MCF 10A (cell line): ENCODE measurements at regions of chr17 and their contacts with region 1.

Region 1: DNA sequence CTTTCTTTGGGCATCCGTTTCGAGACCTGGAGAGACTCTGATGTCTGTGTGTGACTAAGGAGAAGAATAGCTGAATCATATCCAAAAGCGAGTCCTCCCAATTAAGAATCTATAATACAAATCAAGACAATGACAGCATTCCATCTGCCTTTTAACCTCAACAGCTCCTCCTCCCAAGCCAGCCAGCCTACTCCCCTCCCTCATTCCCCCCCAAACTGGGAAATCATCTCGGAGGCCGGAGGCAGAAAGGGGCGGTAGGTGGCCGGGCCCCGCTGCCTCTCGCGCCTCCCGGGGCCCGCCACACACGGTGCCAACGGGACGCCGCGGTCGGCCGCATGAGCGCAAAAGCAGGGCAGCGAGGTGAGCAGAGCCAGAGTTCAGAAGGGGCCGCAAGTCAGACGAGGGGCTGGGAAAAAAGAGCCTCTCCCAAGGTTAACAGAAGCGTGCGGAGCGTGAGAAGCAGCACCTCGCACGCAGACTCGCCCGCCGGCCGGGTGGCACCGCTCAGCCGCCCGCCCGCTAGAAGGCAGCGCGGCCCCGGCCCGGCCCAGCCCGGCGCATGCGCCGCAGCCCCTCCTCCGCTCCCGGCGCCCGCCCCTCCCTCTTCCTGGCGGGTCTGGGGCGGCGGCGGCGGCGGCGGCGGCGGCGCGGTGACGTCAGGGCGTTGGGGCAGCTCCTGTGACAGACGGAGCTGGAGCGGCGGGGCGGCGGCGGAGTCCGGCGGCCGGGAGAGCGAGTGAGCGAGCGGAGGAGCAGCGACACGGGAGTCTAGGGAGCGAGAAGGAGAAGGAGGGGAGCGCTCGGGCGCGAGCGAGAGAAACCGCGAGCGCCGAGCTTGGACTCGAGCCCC is at the start of gene PAFAH1B1:
- DNase-seq: peak; percentile 93
- H3K4me3 Mint-ChIP-seq: peak within 1 kb of the TSS; percentile 98
- H3K27ac Mint-ChIP-seq: peak within 1 kb of the TSS; percentile 96
- H3K4me1 Mint-ChIP-seq: peaks cover 14% of the 10 kb centered on the region
- H3K27me3 Mint-ChIP-seq: no peaks in the 10 kb centered on the region
- CTCF ChIP-seq: peak; percentile 7
- total RNA-seq, gene PAFAH1B1: 170 and 192 TPM in 2 replicates

Region 2: DNA sequence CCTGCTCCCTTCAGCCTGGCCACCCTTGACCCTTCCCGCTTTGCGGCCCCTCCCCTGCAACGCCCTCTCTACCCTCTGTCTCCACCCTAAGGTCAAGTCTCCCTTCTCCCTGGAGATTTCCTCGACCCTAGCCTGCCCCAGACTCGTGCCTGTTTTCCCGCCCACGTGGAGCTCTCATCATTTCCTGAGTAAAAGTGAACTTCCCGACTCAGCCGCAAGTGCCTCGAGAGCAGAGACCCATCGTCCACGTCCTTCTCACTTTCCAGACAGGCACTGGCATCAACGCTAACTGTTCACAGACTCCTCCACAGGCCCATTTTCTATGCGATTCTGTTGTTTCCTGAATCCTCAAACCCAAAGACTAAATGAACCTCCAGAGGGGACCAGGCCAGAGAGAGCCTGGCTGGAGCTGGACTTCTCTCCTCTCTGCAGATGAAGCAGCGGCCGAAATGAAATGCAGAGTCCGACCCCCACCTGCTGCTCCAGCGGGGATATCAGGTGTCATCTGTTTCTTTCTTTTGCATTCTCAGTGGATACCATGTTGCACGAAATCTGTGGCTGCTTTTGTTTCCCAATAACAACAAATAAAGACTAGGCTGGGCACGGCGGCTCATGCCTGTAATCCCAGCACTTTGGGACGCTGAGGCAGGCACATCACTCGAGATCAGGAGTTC is 620.6 kb before region 1 on chr17:
- CTCF ChIA-PET with region 1: no interaction called
- POLR2A ChIA-PET with region 1: no interaction called
- intact Hi-C with region 1: no loop called
- DNase-seq: no peak
- H3K4me3 Mint-ChIP-seq: no peak overlapping the region
- H3K27ac Mint-ChIP-seq: no peak overlapping the region
- H3K4me1 Mint-ChIP-seq: peaks cover 8% of the 10 kb centered on the region
- H3K27me3 Mint-ChIP-seq: no peaks in the 10 kb centered on the region
- CTCF ChIP-seq: no peak

Region 3: DNA sequence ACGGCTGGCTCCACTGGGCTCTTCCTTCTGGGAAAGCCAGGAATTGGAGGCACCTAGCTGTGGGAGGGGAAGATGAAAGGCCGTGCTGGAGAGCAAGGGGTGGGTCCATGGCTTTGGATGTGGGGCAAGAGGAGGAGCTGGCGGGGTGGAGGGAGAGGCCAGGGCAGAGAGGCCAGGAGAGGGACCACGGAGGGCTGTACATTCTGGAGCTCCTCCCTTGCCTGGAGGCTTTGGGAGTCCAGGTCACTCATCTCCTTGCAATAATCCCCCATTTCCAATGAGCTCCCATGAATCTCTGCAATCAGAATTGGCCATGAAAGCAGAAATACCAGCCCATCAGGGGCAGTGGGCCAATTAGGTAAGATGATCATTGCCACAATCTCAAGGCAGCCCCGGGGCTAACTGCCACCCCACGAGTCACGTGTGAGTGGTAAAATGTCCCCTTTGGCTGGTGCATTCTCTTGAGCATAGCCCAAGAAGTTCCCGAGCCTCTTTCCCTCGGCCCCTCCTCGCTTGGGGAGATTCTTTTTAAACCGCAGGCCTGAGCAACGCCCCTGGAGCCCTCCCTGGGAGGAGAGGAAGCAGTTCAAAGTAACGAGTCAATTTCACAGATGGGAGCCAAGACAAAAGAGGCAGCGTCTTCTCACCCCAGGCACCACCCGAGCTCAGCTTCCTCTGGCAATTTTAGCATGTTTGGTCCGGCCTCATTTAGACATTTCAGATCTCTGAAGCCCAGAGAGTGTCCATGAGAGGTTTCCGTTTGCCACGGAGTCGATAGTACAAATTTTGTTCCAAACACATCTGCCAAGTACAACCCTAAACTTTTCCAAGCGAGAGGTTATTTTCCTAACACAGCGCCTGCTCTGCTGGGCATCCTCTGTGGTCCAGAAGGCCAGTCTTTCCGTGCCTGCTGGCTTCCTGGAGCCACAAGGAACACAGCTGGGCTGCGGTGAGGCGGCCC is 581.5 kb before region 1 on chr17:
- CTCF ChIA-PET with region 1: no interaction called
- POLR2A ChIA-PET with region 1: no interaction called
- intact Hi-C with region 1: no loop called
- DNase-seq: peak; percentile 74
- H3K4me3 Mint-ChIP-seq: peak overlapping the region; percentile 53
- H3K27ac Mint-ChIP-seq: peak overlapping the region; percentile 85
- H3K4me1 Mint-ChIP-seq: peaks cover 39% of the 10 kb centered on the region
- H3K27me3 Mint-ChIP-seq: no peaks in the 10 kb centered on the region
- CTCF ChIP-seq: no peak

Region 4: DNA sequence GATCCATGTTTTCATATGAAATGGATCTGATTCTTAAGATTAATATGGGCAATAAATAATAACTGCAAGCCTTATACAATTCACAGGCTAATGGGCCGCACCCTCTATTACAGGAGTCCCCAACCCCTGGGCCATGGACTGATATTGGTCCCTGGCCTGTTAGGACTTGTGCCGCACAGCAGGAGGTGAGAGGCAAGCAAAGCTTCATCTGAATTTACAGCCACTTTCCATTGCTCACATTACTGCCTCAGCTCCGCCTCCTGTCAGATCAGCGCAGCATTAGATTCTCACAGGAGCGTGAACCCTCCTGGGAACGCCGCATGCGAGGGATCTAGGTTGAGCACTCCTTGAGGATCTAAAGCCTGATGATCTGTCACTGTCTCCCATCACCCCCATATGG is 108.3 kb before region 1 on chr17:
- CTCF ChIA-PET with region 1: interaction called, 5 read pairs
- POLR2A ChIA-PET with region 1: interaction called, 11 read pairs
- intact Hi-C with region 1: no loop called
- DNase-seq: peak; percentile 81
- H3K4me3 Mint-ChIP-seq: peak overlapping the region; percentile 65
- H3K27ac Mint-ChIP-seq: no peak overlapping the region
- H3K4me1 Mint-ChIP-seq: peaks cover 27% of the 10 kb centered on the region
- H3K27me3 Mint-ChIP-seq: no peaks in the 10 kb centered on the region
- CTCF ChIP-seq: no peak

Region 5: GRCh38 chr17:2547176-2547575 is 46.0 kb before region 1 on chr17:
- CTCF ChIA-PET with region 1: interaction called, 4 read pairs
- POLR2A ChIA-PET with region 1: interaction called, 21 read pairs
- intact Hi-C with region 1: no loop called
- DNase-seq: peak; percentile 87
- H3K4me3 Mint-ChIP-seq: no peak overlapping the region
- H3K27ac Mint-ChIP-seq: no peak overlapping the region
- H3K4me1 Mint-ChIP-seq: peaks cover 5% of the 10 kb centered on the region
- H3K27me3 Mint-ChIP-seq: no peaks in the 10 kb centered on the region
- CTCF ChIP-seq: no peak

Region 6: GRCh38 chr17:2564878-2565277 is 28.3 kb before region 1 on chr17:
- CTCF ChIA-PET with region 1: no interaction called
- POLR2A ChIA-PET with region 1: interaction called, 66 read pairs
- intact Hi-C with region 1: no loop called
- DNase-seq: peak; percentile 68
- H3K4me3 Mint-ChIP-seq: peak overlapping the region; percentile 33
- H3K27ac Mint-ChIP-seq: peak overlapping the region; percentile 95
- H3K4me1 Mint-ChIP-seq: peaks cover 18% of the 10 kb centered on the region
- H3K27me3 Mint-ChIP-seq: no peaks in the 10 kb centered on the region
- CTCF ChIP-seq: no peak

Region 7: GRCh38 chr17:2634361-2634960 is 41.3 kb after region 1 on chr17:
- CTCF ChIA-PET with region 1: interaction called, 3 read pairs
- POLR2A ChIA-PET with region 1: interaction called, 16 read pairs
- intact Hi-C with region 1: no loop called
- DNase-seq: peak; percentile 87
- H3K4me3 Mint-ChIP-seq: peak overlapping the region; percentile 5
- H3K27ac Mint-ChIP-seq: peak overlapping the region; percentile 74
- H3K4me1 Mint-ChIP-seq: peaks cover 47% of the 10 kb centered on the region
- H3K27me3 Mint-ChIP-seq: no peaks in the 10 kb centered on the region
- CTCF ChIP-seq: no peak